ENCODE measurements at regions of chr6 and their contacts with region 1.

Region 1: GRCh38 chr6:18264219-18264922 is at the start of gene DEK:
- DNase-seq: peak; percentile 96
- H3K4me3 ChIP-seq: peak within 1 kb of the TSS; percentile 82 to 98 (median 94)
- H3K27ac ChIP-seq: peak within 1 kb of the TSS; percentile 96 to 99 (median 98)
- H3K4me1 ChIP-seq: peaks cover 33 to 42% (median 38%) of the 10 kb centered on the region in 4 donors
- H3K27me3 ChIP-seq: no peaks in the 10 kb centered on the region
- CTCF ChIP-seq: peak; percentile 44 to 76 (median 47)
- EP300 ChIP-seq: no peak
- POLR2A ChIP-seq: peak; percentile 14
- total RNA-seq, gene DEK: 134 to 189 (median 142) TPM

Region 2: DNA sequence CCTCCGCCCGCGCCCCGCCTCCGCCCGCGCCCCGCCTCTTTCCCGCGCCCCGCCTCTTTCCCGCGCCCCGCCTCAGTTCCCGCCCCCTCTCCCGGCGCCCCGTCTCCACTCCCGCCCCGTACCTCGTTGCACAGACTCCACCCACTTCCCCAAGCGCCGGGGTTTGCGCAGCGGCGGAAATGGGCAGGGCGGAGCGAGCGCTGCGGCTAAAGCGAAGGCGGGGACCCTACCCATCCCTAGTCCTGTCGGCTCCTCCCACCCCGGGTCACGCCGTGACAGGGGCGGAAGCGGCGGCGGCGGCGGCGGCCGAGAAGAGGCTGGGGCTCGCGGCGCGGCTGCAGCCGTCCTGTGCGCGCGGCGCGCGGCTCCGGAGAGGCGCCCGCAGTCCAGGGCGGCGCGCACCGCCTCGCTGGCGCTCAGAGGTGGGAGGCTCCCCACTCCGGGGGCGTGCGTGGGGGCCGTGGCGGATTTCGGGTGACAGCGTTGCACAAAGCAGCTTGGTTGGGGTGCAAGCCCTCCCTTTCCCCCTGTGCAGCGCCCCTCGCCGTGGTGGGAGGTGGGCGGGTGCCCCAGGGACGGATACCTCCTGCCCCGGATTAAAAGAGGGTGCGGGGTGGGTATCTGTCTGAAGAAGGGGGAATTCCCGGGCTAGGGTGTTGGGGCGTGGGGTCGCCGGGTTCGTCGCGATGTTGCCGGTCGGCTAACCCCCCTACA is 109.1 kb before region 1 on chr6 and contains the start of gene KDM1B:
- intact Hi-C with region 1: loop called (anchors 5 kb)
- DNase-seq: peak; percentile 99
- H3K4me3 ChIP-seq: peak within 1 kb of the TSS; percentile 92 to 94 (median 93)
- H3K27ac ChIP-seq: peak within 1 kb of the TSS; percentile 83 to 92 (median 86)
- H3K4me1 ChIP-seq: peaks cover 15 to 25% (median 22%) of the 10 kb centered on the region in 4 donors
- H3K27me3 ChIP-seq: no peaks in the 10 kb centered on the region
- CTCF ChIP-seq: no peak
- EP300 ChIP-seq: no peak
- POLR2A ChIP-seq: peak; percentile 10
- total RNA-seq, gene KDM1B: 10.3 to 13.2 (median 11.7) TPM

Region 3: DNA sequence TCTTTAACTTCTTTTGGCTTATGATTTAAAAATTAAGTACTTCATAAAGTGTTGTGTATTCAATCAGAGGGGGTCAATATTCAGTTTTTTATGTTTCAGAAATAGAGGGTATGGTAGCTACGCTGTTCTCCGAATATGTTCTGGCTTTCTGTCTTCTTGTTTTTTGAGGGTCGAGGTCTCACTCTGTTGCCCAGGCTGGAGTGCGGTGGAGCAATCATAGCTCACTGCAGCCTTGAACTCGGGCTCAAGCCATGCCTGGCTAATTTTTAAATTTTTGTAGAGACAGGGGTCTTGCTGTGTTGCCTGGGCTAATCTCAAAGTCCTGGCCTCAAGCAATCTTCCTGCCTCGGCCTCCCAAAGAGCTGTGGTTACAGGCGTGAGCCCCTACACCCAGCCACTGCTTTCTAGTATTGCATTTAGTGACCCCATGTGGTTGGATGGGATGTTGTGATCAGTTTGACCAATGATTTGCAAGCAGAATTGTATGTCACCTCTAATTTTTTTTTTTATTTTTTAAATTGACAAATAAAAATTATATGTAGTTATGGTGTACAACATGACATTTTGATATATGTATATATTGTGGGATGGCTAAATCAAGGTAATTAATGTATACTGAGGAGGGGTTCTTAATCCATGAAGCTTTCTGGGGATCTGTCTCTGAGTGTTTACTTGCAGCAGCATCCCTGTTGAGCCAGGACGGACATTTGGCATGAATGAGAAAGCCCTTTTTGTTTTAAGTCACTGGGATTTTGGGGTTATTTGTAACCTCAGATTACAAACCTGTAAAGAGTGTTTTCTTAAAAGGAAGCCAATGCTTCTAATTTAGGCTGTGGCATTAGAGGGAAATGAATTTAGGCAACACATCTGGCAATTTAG is 38.4 kb after region 1 on chr6:
- intact Hi-C with region 1: no loop called
- DNase-seq: no peak
- H3K4me3 ChIP-seq: no peak overlapping the region
- H3K27ac ChIP-seq: no peak overlapping the region
- H3K4me1 ChIP-seq: no peaks in the 10 kb centered on the region
- H3K27me3 ChIP-seq: no peaks in the 10 kb centered on the region
- CTCF ChIP-seq: no peak
- EP300 ChIP-seq: no peak
- POLR2A ChIP-seq: no peak